ENCODE measurements at regions of chr10 and their contacts with region 1.

Region 1: GRCh38 chr10:93947055-93947454 is 46.7 kb upstream of the PLCE1 start:
- DNase-seq: peak; percentile 84

Region 2: GRCh38 chr10:93993782-93994437 is 46.9 kb after region 1 on chr10 and contains the start of gene PLCE1:
- intact Hi-C with region 1: loop called (anchors 2 kb)
- DNase-seq: peak; percentile 80
- total RNA-seq, gene PLCE1: 51.5 TPM

Region 3: GRCh38 chr10:94108200-94108599 is 161.1 kb after region 1 on chr10:
- intact Hi-C with region 1: no loop called
- DNase-seq: no peak

Region 4: DNA sequence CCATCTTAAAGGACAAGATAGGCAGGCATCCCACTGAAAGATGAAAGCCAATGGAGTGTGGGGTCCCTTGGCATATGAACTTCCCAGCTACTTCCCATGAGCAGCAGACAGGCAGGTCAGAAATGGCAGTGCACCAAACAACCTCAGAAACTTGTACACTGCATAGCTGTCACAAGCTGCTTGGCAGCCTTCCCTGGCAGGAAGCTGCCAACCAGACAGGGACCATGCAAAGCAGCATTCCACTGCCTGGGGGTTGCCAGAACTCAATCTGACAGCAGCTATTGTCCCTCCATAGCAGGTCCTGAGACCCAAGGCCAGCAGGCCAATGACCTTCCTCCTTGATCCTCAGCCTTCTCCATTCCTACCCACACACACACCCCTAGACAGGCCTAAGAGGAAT is 186.2 kb after region 1 on chr10:
- intact Hi-C with region 1: loop called (anchors 5 kb)
- DNase-seq: peak; percentile 90

Region 5: DNA sequence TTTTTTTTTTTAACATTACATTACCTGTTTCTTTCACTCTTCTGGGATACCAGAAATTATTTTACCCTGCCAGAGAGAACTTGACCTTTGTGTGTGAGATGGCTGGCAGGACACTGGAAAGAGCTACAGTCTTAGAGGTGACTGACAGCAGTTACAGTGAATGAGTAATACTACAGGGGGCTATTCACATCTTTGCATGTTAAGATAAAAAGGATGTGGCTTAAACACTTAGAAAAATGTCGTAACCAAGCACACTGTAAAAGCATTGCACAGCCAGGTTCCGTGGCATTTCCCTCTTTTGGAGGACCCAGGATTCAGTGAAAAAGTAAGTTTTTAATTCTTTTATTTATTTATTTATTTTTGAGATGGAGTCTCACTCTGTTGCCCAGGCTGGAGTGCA is 436.5 kb after region 1 on chr10:
- intact Hi-C with region 1: no loop called
- DNase-seq: no peak